ENCODE measurements at regions of chr11 and their contacts with region 1.

Region 1: DNA sequence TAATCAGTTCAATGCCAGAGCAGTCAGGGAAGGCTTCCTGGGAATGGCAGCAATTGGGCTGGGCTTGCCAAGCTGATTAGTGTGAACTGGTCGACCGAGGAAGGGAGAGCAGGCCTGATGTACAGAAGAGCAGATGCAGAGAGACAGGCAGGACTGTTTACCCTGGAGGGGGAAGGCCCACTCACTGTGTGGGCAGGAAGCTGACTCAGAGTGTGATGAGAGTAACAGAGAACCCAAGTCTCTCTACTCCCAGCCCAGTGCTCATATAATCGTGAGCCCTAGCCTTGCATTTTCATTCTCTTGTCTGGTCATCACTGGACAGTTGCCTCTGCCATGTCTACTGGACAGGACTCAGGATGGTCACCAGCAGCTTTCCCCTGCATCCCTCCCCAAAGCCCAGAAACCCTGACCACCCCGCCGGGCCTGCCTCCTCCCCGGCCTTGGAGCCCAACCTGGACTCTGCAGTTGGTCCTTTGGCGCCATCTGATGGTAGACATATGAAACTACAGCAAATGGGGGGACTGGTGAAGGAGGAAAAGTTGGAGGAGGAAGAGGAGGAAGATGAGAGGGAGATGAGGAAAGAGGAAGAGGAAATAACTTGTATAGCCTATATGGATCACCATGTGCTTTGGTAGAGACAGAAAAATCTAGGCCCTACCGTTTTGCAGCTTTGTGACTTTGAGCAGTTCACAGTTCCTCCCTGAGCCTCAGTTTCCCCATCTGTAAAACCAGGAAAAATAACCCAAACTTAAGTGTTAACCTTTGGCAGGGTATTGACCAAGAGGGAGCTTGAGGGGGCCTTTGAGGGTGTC is 43.4 kb upstream of the PRDM11 start:
- DNase-seq: peak; percentile 87
- H3K4me3 ChIP-seq: peak overlapping the region in 1 of 2 experiments; percentile 49; a peak in 2 of 4 replicates
- H3K27ac ChIP-seq: peak overlapping the region in 1 of 2 experiments; percentile 26; a peak in 1 of 4 replicates
- H3K4me1 ChIP-seq: peaks cover 0 to 4% of the 10 kb centered on the region in 2 experiments; a peak in 2 of 4 replicates
- H3K27me3 ChIP-seq: peaks cover 21% of the 10 kb centered on the region; the same call in 1 of the 2 replicates
- CTCF ChIP-seq: peak; percentile 98
- EP300 ChIP-seq: no peak; a peak in 1 of 4 replicates
- RAD21 ChIP-seq: peak; percentile 97

Region 2: DNA sequence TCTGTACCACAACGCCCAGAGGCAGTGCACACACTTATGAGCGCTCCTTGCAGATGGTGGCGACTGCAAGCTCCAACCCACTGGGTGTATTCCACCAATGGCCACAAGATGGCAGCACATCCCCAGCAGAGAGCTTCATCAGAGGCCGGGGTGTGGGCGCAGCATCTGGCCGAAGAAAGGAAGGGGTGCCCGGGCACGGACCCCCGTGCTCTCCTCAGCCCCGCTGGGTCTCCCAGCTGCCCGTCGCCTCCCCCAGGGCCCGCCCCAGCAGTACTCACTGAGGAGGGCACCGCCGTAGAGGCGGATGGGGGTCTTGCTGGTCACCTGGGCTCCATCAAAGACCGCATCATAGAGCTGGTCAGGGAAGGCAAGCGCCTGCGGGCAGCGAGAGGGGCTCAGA is 166.5 kb before region 1 on chr11:
- CTCF ChIA-PET with region 1: interaction called, 1,245 read pairs
- POLR2A ChIA-PET with region 1: interaction called, 17 read pairs
- DNase-seq: peak; percentile 91
- H3K4me3 ChIP-seq: peak overlapping the region in 1 of 2 experiments; percentile 44; a peak in 1 of 4 replicates
- H3K27ac ChIP-seq: no peak overlapping the region
- H3K4me1 ChIP-seq: peaks cover 0 to 6% of the 10 kb centered on the region in 2 experiments; a peak in 1 of 4 replicates
- H3K27me3 ChIP-seq: no peaks in the 10 kb centered on the region
- CTCF ChIP-seq: peak; percentile 89
- EP300 ChIP-seq: no peak
- RAD21 ChIP-seq: peak; percentile 95

Region 3: GRCh38 chr11:44964526-44965209 is 138.3 kb before region 1 on chr11:
- CTCF ChIA-PET with region 1: interaction called, 35 read pairs
- POLR2A ChIA-PET with region 1: no interaction called
- DNase-seq: no peak
- H3K4me3 ChIP-seq: no peak overlapping the region
- H3K27ac ChIP-seq: no peak overlapping the region
- H3K4me1 ChIP-seq: no peaks in the 10 kb centered on the region; a peak in 1 of 4 replicates
- H3K27me3 ChIP-seq: peaks cover 6% of the 10 kb centered on the region; the same call in 1 of the 2 replicates
- CTCF ChIP-seq: no peak
- EP300 ChIP-seq: no peak
- RAD21 ChIP-seq: no peak

Region 4: GRCh38 chr11:45048870-45049691 is 53.9 kb before region 1 on chr11:
- CTCF ChIA-PET with region 1: interaction called, 23 read pairs
- POLR2A ChIA-PET with region 1: no interaction called
- DNase-seq: peak; percentile 79
- H3K4me3 ChIP-seq: no peak overlapping the region; a peak in 1 of 4 replicates
- H3K27ac ChIP-seq: peak overlapping the region in 1 of 2 experiments; percentile 61; a peak in 2 of 4 replicates
- H3K4me1 ChIP-seq: peaks cover 10 to 22% of the 10 kb centered on the region in 2 experiments
- H3K27me3 ChIP-seq: peaks cover 10% of the 10 kb centered on the region; the same call in 1 of the 2 replicates
- CTCF ChIP-seq: no peak
- EP300 ChIP-seq: peak in 1 of 2 experiments; percentile 92; a peak in 2 of 4 replicates
- RAD21 ChIP-seq: no peak; the same call in 1 of the 2 replicates

Region 5: DNA sequence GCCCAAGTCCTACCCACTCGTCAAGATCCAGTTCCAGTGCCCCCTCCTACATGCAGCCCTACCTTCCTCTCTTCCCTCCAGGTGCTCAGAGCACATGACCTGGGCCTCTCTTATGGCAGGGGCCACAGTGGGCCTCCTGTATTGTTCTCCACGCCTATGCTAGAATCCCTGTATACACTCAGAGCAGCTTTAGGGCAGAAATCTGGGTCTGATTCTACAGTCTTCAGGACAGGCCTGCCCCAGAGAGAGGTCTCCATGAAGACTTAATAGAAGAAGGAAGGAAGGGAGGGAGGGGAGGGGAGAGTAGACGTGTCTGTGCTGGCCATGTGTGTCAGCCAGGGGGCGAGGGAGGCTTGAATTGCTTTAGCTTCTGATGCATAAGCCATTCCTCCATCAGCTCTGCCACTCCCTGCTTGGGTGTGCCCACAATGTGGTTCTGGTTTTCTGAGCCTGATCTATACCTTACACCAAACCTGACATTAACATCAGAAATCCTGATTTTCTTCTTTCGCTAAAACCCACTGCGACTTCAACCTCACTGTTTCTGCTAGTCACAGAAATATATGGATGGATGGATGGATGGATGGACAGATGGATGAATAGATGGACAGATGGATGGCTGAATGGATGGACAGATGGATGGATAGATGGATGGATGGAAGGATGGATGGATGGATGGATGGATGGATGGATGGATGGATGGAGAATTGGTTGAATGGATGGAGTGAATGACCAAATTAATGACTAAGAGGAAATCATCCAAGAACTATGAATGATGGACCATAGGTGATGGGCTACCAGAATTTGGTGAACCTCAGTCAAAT is 13.1 kb before region 1 on chr11:
- CTCF ChIA-PET with region 1: interaction called, 42 read pairs
- POLR2A ChIA-PET with region 1: no interaction called
- DNase-seq: no peak
- H3K4me3 ChIP-seq: no peak overlapping the region
- H3K27ac ChIP-seq: peak overlapping the region in 1 of 2 experiments; percentile 38; a peak in 1 of 4 replicates
- H3K4me1 ChIP-seq: peaks cover 0 to 9% of the 10 kb centered on the region in 2 experiments; a peak in 1 of 4 replicates
- H3K27me3 ChIP-seq: no peaks in the 10 kb centered on the region; the same call in 1 of the 2 replicates
- CTCF ChIP-seq: no peak
- EP300 ChIP-seq: no peak
- RAD21 ChIP-seq: no peak

Region 6: GRCh38 chr11:45147017-45147728 is 44.2 kb after region 1 on chr11:
- CTCF ChIA-PET with region 1: no interaction called
- POLR2A ChIA-PET with region 1: no interaction called
- DNase-seq: peak; percentile 98
- H3K4me3 ChIP-seq: peak overlapping the region; percentile 74 to 81
- H3K27ac ChIP-seq: peak overlapping the region; percentile 68 to 95
- H3K4me1 ChIP-seq: peaks cover 15 to 28% of the 10 kb centered on the region in 2 experiments; a peak in 2 of 4 replicates
- H3K27me3 ChIP-seq: no peaks in the 10 kb centered on the region; the same call in 1 of the 2 replicates
- CTCF ChIP-seq: no peak
- EP300 ChIP-seq: 0 out of 4 replicates have a peak, but pooled peaks of 1 of the 2 experiments have one; percentile 4
- RAD21 ChIP-seq: no peak

Region 7: GRCh38 chr11:45332276-45332934 is 229.4 kb after region 1 on chr11:
- CTCF ChIA-PET with region 1: interaction called, 207 read pairs
- POLR2A ChIA-PET with region 1: no interaction called
- DNase-seq: peak; percentile 81
- H3K4me3 ChIP-seq: no peak overlapping the region
- H3K27ac ChIP-seq: no peak overlapping the region
- H3K4me1 ChIP-seq: peaks cover 4 to 13% of the 10 kb centered on the region in 2 experiments; a peak in 2 of 4 replicates
- H3K27me3 ChIP-seq: no peaks in the 10 kb centered on the region; the same call in none of the 2 replicates
- CTCF ChIP-seq: peak; percentile 68
- EP300 ChIP-seq: no peak
- RAD21 ChIP-seq: peak; percentile 77

Measured in SK-N-SH (cell line).